Activated CD4-positive, alpha-beta memory T cell treated with anti-CD3 and anti-CD28 coated beads, Interleukin-2, amount 10 ng/mL, durations not matched to agents 7 days and 5 days (primary cell): ENCODE measurements at regions of chr2 and their contacts with region 1.

Region 1: DNA sequence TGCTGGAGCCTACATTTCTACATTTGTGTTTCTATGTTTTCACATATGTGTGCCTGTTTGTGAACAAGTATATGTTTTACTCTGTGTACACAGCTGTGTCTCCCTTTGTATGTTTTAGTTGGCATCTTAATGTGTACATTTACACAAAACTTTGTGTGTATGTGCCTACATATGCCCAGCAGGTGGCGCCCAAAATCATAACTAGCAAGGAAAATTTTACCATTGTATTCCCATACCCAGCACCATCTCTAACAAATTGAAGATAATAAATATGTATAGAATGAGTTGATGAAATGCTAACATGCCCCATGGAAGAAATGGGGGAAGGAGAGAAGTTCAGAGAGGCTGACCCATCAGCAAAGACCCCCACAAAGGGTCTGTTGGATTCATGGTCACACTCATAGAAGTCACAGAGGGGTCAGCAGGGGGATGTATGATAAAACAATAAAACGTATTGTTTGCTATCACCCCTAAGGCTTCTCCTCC is 48.1 kb downstream of the PKDCC start:
- DNase-seq: peak; percentile 79
- H3K4me3 Mint-ChIP-seq: no peak overlapping the region
- H3K27ac Mint-ChIP-seq: no peak overlapping the region
- H3K4me1 Mint-ChIP-seq: peaks cover 39% of the 10 kb centered on the region
- H3K27me3 Mint-ChIP-seq: peaks cover 21% of the 10 kb centered on the region

Region 2: DNA sequence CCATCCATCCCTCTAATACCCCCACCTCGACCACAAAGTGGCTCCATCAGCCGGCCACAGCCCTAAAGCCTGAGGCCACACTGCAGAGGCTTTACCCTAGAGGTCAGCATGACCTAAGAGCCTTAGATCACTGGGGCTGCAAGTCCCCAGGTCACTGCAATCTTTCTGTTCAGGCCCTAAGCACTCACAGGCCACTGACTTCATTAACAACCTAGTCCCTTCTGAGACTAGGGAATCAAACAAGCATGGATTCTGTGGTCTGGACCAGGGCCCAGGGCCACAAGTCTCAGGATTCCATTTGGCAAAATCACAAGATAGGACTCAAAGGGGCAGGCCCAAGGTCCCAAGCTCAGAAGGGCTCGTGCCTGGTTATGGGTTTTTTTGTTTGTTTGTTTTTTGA is 85.2 kb before region 1 on chr2:
- CTCF ChIA-PET with region 1: no interaction called
- POLR2A ChIA-PET with region 1: no interaction called
- DNase-seq: no peak
- H3K4me3 Mint-ChIP-seq: no peak overlapping the region
- H3K27ac Mint-ChIP-seq: no peak overlapping the region
- H3K4me1 Mint-ChIP-seq: peaks cover 10% of the 10 kb centered on the region
- H3K27me3 Mint-ChIP-seq: peaks cover 30% of the 10 kb centered on the region

Region 3: GRCh38 chr2:42127425-42128424 is 31.8 kb after region 1 on chr2:
- CTCF ChIA-PET with region 1: interaction called, 20 read pairs
- POLR2A ChIA-PET with region 1: interaction called, 240 read pairs
- DNase-seq: peak; percentile 45
- H3K4me3 Mint-ChIP-seq: peak overlapping the region; percentile 48
- H3K27ac Mint-ChIP-seq: peak overlapping the region; percentile 88
- H3K4me1 Mint-ChIP-seq: peaks cover 92% of the 10 kb centered on the region
- H3K27me3 Mint-ChIP-seq: no peaks in the 10 kb centered on the region

Region 4: GRCh38 chr2:42132966-42133641 is 37.1 kb after region 1 on chr2:
- CTCF ChIA-PET with region 1: interaction called, 20 read pairs
- POLR2A ChIA-PET with region 1: interaction called, 240 read pairs
- DNase-seq: peak; percentile 96
- H3K4me3 Mint-ChIP-seq: peak overlapping the region; percentile 62
- H3K27ac Mint-ChIP-seq: peak overlapping the region; percentile 98
- H3K4me1 Mint-ChIP-seq: peaks cover 88% of the 10 kb centered on the region
- H3K27me3 Mint-ChIP-seq: no peaks in the 10 kb centered on the region

Region 5: GRCh38 chr2:42169100-42169873 is 73.3 kb after region 1 on chr2 and contains the start of gene EML4:
- CTCF ChIA-PET with region 1: interaction called, 30 read pairs
- POLR2A ChIA-PET with region 1: interaction called, 34 read pairs
- DNase-seq: peak; percentile 92
- H3K4me3 Mint-ChIP-seq: no peak within 1 kb of the TSS
- H3K27ac Mint-ChIP-seq: peak within 1 kb of the TSS; percentile 63
- H3K4me1 Mint-ChIP-seq: peaks cover 24% of the 10 kb centered on the region
- H3K27me3 Mint-ChIP-seq: peaks cover 7% of the 10 kb centered on the region
- total RNA-seq, gene EML4: 130 to 133 TPM

Region 6: GRCh38 chr2:42196403-42197267 is 100.7 kb after region 1 on chr2:
- CTCF ChIA-PET with region 1: interaction called, 49 read pairs
- POLR2A ChIA-PET with region 1: interaction called, 3 read pairs
- DNase-seq: peak; percentile 31
- H3K4me3 Mint-ChIP-seq: no peak overlapping the region
- H3K27ac Mint-ChIP-seq: no peak overlapping the region
- H3K4me1 Mint-ChIP-seq: peaks cover 58% of the 10 kb centered on the region
- H3K27me3 Mint-ChIP-seq: no peaks in the 10 kb centered on the region

Region 7: DNA sequence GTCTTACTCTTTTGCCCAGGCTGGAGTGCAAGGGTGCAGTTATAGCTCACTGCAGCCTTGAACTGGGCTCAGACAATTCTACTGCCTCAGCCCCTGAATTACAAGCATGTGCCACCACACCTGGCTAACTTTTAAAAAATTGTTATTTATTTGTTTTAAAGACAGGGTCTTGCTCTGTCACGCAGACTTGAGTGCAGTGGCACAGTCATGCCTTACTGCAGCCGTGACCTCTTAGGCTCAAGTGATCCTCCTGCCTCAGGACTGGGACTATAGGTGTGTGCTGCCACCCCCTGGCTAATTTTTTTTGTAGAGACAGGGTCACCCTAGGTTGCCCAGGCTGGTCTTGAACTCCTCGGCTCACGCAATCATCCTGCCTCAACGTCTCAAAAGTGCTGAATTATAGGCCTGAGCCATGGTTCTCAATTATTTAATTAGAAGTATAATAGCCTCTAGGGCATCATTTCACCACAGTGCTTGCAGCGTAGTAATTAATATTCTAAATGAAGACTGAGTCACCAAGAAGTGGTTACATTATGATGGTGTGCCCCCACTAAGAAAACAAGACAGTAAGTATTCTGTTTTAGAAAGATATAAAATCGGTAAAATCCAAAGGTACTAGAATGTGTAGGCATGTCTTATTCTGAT is 142.8 kb after region 1 on chr2:
- CTCF ChIA-PET with region 1: interaction called, 39 read pairs
- POLR2A ChIA-PET with region 1: no interaction called
- DNase-seq: peak; percentile 43
- H3K4me3 Mint-ChIP-seq: no peak overlapping the region
- H3K27ac Mint-ChIP-seq: no peak overlapping the region
- H3K4me1 Mint-ChIP-seq: peaks cover 35% of the 10 kb centered on the region
- H3K27me3 Mint-ChIP-seq: no peaks in the 10 kb centered on the region

Region 8: DNA sequence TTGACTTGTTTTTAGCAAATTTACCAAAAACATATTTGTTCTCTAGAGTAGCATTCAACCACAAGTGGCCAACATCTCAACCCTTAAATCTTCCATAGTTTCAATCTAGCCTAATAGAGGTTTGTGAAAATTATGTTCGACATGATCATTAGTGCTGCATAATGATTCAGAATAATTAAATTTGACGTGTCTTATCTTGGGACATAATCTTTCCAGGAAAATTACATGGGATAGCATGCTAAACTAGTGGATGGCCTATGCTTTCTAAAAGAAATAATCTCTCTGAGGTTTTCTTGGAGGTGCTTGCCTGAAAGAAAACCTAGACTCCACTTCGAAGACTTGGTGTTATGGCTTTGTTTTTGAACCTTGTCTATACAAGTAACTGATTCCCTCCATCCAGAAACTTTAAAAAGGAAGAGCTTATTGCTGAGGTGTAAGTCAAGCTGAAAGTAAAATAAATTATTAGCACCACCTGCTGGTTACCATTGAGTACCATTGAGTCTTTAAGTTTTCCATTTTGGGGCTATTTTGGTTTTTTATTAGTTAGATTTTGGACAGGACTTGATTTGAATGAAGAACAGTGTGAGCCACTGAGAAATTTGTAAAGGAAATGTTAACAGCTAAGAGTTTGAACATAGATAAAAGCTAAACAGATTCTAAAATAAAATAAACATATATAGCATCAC is 232.3 kb after region 1 on chr2:
- CTCF ChIA-PET with region 1: interaction called, 49 read pairs
- POLR2A ChIA-PET with region 1: interaction called, 7 read pairs
- DNase-seq: no peak
- H3K4me3 Mint-ChIP-seq: no peak overlapping the region
- H3K27ac Mint-ChIP-seq: no peak overlapping the region
- H3K4me1 Mint-ChIP-seq: peaks cover 25% of the 10 kb centered on the region
- H3K27me3 Mint-ChIP-seq: no peaks in the 10 kb centered on the region